ENCODE measurements at regions of chr17 and their contacts with region 1.

Region 1: DNA sequence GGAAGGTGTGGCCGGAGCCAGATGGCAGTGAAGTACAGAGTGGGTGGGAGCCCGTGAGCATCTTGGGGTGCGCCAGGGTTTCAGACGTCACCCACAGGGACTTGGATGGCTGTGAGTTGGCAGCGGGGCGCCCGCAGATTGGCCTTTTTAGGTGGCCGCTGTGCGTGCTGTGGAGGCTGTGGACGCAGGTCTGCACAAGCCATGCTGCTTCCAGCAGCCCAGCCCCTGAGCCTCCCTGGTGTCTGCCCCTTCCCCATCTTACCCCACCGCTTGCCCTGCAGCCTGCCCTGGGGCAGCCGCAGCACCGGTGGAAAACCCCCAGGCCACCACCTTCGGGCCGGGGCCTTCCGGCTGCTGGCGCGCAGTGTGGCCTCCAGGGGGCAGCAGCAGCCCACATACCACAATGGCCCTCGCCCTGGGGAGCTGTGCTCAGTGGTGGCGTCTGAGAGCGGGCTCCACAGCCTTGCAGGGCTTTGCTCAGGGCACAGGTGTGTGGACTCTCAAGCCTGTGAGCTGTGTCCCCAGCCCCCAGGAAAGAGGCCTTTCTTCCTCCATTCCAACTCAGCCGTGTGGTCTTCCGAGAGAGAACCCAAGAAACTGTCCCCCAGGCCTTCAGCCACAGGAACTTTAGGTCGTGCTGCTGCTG is 11.8 kb downstream of the ENDOV start:
- DNase-seq: peak; percentile 29
- ATAC-seq: peak; percentile 96
- H3K4me3 ChIP-seq: no peak overlapping the region
- H3K27ac ChIP-seq: no peak overlapping the region
- H3K4me1 ChIP-seq: no peaks in the 10 kb centered on the region
- H3K27me3 ChIP-seq: no peaks in the 10 kb centered on the region
- CTCF ChIP-seq: peak; percentile 98 to 99 (median 99)
- POLR2A ChIP-seq: no peak
- RAD21 ChIP-seq: peak; percentile 99

Region 2: DNA sequence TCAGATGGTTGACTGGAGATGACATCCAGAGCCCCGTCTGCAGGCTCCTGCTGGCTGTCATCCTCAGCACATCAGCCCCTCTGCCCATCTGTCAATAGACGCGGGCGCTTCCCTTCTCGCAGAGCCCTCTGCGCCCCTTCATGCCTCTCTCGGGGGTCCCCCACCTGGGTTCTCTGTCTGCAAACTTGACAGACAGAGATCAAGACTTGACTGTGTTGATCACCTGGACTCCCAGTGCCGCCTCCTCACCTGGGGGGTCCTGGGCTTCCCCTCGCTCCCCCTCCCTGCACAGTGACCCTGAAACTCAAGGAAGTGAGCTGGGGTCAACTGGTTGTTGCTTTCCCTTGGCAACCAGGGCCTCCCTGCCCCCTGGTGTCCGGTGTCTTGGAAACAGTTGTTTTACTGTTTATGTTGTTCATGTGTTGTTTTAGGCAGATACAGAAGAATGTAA is 134.3 kb before region 1 on chr17:
- CTCF ChIA-PET with region 1: no interaction called
- POLR2A ChIA-PET with region 1: no interaction called
- RAD21 ChIA-PET with region 1: no interaction called
- intact Hi-C with region 1: no loop called
- DNase-seq: no peak
- ATAC-seq: no peak
- H3K4me3 ChIP-seq: no peak overlapping the region
- H3K27ac ChIP-seq: no peak overlapping the region
- H3K4me1 ChIP-seq: no peaks in the 10 kb centered on the region
- H3K27me3 ChIP-seq: no peaks in the 10 kb centered on the region
- CTCF ChIP-seq: no peak
- POLR2A ChIP-seq: no peak
- RAD21 ChIP-seq: no peak; the same call in 1 of the 2 replicates

Region 3: GRCh38 chr17:80498242-80498919 is 71.6 kb after region 1 on chr17:
- CTCF ChIA-PET with region 1: no interaction called
- POLR2A ChIA-PET with region 1: no interaction called
- RAD21 ChIA-PET with region 1: no interaction called
- intact Hi-C with region 1: no loop called
- DNase-seq: no peak
- ATAC-seq: no peak
- H3K4me3 ChIP-seq: no peak overlapping the region
- H3K27ac ChIP-seq: no peak overlapping the region
- H3K4me1 ChIP-seq: peaks cover 8 to 19% of the 10 kb centered on the region in 2 experiments
- H3K27me3 ChIP-seq: no peaks in the 10 kb centered on the region
- CTCF ChIP-seq: no peak
- POLR2A ChIP-seq: no peak
- RAD21 ChIP-seq: no peak

Region 4: DNA sequence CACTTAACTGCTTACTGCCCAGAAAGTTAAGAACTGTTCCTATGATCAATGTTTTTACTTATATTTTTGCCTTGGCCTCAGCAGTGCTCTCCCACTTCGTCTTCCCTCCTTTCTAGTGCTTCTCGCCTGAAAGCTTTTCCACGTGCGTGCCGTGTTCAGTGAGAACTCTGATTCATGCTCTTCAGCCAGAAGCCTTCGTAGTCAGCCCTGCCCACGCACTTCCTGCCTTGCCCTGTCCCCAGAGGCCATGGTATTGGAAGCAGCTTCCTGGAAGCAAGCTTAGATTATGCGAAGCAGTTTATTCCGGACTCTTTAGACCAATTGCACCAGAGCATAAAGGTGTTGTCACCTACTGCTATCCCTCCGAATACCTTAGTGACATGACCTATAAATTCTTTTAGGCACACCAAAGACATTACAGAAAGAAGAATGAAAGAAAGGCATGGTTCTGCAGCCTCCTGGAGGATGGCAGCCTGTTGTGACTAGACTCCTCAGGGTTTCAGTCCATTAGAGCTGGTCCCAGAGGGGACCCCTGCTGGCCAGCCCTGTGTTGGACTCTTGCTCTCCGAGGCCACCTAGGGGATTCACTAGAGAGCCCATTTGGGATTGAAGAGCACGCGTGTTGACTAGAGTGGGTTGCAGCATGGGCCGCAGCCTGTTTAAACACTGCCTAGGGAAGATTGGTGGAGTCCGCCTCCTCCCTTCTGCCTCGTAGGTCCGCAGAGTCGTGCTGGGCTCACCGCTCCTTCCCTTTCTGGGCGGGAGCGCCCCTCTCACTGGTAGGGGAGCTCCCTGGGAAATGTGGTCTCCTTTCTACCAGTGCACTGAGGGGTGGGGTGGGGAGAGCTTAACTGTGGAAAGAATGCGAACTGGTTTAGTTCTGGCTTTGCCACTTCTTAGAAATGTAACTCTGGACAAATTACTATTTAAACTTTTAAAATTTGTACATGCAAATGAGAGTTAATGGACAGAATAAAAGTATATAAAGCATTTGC is 223.2 kb after region 1 on chr17:
- CTCF ChIA-PET with region 1: interaction called, 11 read pairs
- POLR2A ChIA-PET with region 1: no interaction called
- RAD21 ChIA-PET with region 1: interaction called in 1 of 2 experiments, 4 read pairs
- intact Hi-C with region 1: loop called (anchors 1 kb)
- DNase-seq: peak; percentile 63
- ATAC-seq: peak; percentile 98
- H3K4me3 ChIP-seq: no peak overlapping the region
- H3K27ac ChIP-seq: no peak overlapping the region
- H3K4me1 ChIP-seq: peaks cover 6 to 31% of the 10 kb centered on the region in 2 experiments; a peak in 3 of 4 replicates
- H3K27me3 ChIP-seq: no peaks in the 10 kb centered on the region
- CTCF ChIP-seq: peak; percentile 99 to 100 (median 99)
- POLR2A ChIP-seq: no peak
- RAD21 ChIP-seq: peak; percentile 76

Region 5: DNA sequence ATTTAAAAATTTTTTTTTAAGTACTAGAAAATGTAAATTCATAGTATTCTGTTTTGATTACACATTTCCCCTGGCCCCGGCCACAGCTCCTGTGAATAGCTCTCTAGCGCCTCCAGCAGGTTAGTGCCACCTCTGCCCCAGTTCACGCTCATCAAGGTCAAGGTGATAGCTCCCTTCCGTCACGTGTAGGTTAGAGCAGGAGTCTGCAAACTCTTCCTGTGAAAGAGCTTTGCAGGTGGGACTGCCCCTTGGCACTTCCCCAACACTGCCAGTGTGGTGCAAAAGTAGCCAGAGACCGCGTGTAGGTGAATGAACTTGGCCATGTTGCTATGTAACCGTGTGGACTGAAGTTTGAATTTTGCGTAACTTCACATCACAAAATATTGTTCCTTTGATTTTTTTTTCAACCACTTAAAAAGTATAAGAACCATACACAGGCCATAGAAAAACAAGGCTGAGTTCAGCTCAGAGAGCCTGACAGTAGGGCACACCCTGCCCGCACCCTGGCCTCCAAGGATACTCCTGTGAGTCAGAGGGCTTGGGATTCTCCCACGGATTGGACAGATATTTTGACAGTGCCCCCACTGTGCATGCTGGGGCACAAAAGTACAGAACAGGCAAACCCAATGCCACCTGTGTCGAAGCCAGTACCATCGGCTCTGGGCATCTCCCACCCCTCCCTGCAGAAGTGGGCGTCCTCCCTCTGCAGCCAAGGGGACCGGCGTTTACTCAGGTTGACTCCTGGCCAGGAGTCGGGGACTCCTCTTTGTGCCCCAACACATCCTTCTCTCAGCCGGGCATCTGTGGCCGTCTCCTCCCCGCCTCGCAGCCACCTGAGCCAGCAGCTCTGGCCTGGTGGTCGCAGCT is 472.8 kb after region 1 on chr17:
- CTCF ChIA-PET with region 1: interaction called, 35 read pairs
- POLR2A ChIA-PET with region 1: no interaction called
- RAD21 ChIA-PET with region 1: interaction called, 3 to 4 read pairs
- intact Hi-C with region 1: loop called (anchors 1 kb)
- DNase-seq: peak; percentile 40
- ATAC-seq: peak; percentile 89
- H3K4me3 ChIP-seq: no peak overlapping the region
- H3K27ac ChIP-seq: no peak overlapping the region
- H3K4me1 ChIP-seq: peaks cover 0 to 5% of the 10 kb centered on the region in 2 experiments; a peak in 1 of 4 replicates
- H3K27me3 ChIP-seq: no peaks in the 10 kb centered on the region
- CTCF ChIP-seq: peak; percentile 87 to 99 (median 97)
- POLR2A ChIP-seq: no peak
- RAD21 ChIP-seq: peak; percentile 91

Region 6: DNA sequence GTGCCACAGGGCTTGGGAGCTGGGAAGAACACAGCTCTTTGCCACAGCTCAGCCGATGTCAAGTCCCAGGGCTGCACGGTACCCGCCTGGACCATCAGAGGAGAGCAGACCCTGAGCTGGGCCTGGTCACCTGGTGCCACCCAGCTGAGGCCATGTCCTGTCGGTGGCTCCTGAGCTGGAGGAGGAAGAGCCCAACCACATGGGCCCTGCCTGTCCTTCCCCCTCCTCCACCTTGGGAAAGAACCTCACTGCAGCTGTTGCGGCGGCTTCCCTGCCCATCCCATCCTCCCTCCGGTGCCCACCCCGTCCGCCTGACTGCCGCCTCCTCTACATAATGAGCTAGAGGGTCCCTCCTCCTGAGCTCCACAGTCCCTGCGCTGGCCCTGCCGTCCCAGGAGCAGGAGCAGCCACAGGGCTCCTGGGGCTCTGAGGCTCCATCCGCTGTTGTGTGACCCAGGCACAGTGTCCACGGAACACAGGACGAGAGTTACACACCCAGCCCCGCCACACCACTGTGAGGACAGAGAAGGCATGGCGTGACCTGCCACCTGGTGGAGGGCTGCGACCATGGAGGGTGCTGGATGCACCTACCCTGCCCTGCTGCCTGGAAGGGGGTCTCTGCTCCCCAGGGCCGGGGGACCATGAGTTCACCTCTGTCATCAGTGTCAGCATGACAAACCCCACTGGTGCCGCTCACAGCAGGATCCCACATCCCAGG is 543.4 kb after region 1 on chr17:
- CTCF ChIA-PET with region 1: interaction called, 16 read pairs
- POLR2A ChIA-PET with region 1: no interaction called
- RAD21 ChIA-PET with region 1: interaction called in 1 of 2 experiments, 6 read pairs
- intact Hi-C with region 1: loop called (anchors 1 kb)
- DNase-seq: no peak
- ATAC-seq: peak; percentile 78
- H3K4me3 ChIP-seq: no peak overlapping the region
- H3K27ac ChIP-seq: no peak overlapping the region
- H3K4me1 ChIP-seq: no peaks in the 10 kb centered on the region
- H3K27me3 ChIP-seq: no peaks in the 10 kb centered on the region
- CTCF ChIP-seq: peak; percentile 67 to 75 (median 70)
- POLR2A ChIP-seq: no peak
- RAD21 ChIP-seq: peak; percentile 88

Region 7: DNA sequence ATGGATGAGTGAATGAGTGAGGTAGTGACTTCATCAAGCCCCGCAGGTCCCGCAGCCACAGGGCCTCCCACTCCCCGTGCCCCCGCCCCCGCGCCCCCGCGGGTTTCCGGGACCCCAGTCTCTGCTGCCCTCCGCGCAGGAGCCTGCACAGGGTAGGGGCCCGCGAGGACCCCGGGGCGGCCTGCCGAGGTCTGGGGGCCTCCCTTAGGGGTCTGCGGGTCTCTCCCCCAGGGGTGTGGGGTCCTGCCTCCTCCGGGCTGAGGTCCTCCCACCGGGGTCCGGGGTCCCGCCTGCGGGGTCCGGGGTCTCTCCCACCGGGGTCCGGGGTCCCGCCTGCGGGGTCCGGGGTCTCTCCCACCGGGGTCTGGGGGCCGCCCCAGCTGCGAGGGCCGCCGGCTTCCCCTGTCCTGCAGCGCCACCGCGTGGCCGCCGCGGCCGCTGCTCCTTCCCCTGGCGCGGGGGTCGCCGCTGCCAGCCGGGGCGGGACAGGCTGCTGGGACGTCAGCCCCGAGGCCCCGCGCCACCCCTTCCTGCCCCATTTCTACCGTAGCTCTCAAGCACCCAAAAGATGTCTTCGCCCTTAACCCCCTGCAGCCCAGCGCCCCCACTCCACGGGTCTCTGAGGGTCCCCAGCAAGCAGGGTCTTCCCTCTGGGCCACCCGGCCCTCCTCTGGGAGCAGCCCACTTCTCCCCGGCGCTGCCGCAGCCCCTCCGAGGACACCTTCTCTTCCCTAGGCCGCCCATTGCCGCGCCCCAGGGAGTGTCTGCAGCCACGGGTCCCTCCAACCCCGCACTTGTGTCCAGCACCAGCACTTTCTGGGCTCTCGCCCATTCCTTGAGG is 554.5 kb after region 1 on chr17:
- CTCF ChIA-PET with region 1: interaction called, 9 read pairs
- POLR2A ChIA-PET with region 1: interaction called, 3 read pairs
- RAD21 ChIA-PET with region 1: interaction called, 3 to 5 read pairs
- intact Hi-C with region 1: loop called (anchors 1 kb)
- DNase-seq: no peak
- ATAC-seq: peak; percentile 57
- H3K4me3 ChIP-seq: no peak overlapping the region
- H3K27ac ChIP-seq: no peak overlapping the region; the same call in 1 of the 2 replicates
- H3K4me1 ChIP-seq: peaks cover 21 to 32% of the 10 kb centered on the region in 2 experiments
- H3K27me3 ChIP-seq: no peaks in the 10 kb centered on the region
- CTCF ChIP-seq: peak; percentile 59 to 95 (median 61)
- POLR2A ChIP-seq: no peak
- RAD21 ChIP-seq: peak; percentile 83